Colonic mucosa (tissue), 4 donors: ENCODE measurements at regions of chrX and their contacts with region 1.

Region 1: DNA sequence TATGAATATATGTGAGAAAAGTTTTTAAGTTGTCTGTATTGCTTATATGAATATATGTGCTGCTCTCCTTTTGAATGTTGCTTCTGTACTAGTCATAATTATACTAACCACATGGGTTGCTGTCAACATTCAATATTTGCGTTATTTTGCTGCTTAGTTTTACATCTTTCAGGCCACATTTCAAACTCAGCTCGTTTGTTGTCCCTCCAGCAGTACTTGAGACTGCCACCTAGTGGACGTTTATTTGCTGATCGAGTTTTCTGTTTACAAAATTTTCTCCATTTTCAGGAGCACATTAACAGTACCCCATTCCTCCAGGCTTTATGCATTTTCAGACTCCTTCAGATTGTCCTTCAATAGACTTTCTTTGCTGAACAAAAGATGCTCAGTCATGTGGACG is 75.8 kb downstream of the NUDT11 start:
- DNase-seq: peak; percentile 24
- H3K4me3 ChIP-seq: no peak overlapping the region
- H3K27ac ChIP-seq: no peak overlapping the region
- H3K4me1 ChIP-seq: no peaks in the 10 kb centered on the region
- H3K27me3 ChIP-seq: no peaks in the 10 kb centered on the region
- CTCF ChIP-seq: peak; percentile 73

Region 2: DNA sequence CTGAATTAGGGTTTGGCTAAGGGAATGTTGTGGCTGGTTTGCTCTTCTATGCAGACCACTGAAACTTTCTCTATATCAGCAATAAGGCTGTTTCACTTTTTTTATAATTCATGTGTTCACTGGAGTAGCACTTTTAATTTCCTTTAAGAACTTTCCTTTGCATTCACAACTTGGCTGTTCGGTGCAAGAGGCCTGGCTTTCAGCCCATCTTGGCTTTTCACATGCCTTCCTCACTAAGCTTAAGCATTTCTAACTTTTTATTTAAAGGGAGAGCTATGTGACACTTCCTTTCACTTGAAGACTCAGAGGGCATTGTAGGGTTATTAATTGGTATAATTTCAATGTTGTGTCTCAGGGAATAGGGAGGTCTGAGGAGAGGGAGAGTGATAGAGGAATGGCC is 748.9 kb before region 1 on chrX:
- intact Hi-C with region 1: no loop called
- DNase-seq: no peak
- H3K4me3 ChIP-seq: no peak overlapping the region
- H3K27ac ChIP-seq: no peak overlapping the region
- H3K4me1 ChIP-seq: no peaks in the 10 kb centered on the region
- H3K27me3 ChIP-seq: no peaks in the 10 kb centered on the region
- CTCF ChIP-seq: no peak

Region 3: DNA sequence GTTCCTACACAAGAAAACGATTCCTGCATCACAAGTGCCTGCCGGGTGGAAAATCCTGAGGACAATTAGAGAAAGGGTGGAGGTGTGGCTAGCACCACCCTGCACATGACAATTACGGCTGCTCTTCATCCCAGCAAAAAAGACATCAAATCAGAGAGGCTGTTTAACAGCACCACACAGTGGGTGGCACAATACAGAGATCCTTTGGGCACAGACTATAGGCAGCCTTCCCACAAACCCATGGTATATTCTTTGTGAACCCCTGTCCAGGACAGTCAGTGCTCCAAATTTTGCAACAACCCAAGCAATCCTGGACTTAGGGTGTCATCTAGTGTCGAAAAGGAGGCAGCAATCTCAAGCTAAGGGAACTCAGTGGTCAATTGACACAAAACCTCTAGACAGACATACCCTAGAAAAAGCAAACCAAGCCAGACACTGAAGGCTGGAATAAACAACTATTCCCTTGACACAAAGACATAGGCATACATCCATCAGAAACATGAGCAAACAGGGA is 372.7 kb before region 1 on chrX:
- intact Hi-C with region 1: no loop called
- DNase-seq: no peak
- H3K4me3 ChIP-seq: no peak overlapping the region
- H3K27ac ChIP-seq: no peak overlapping the region
- H3K4me1 ChIP-seq: no peaks in the 10 kb centered on the region
- H3K27me3 ChIP-seq: peaks cover 5% of the 10 kb centered on the region
- CTCF ChIP-seq: no peak

Region 4: GRCh38 chrX:51336584-51336983 is 84.0 kb before region 1 on chrX:
- intact Hi-C with region 1: loop called (anchors 5 kb)
- DNase-seq: no peak
- H3K4me3 ChIP-seq: no peak overlapping the region
- H3K27ac ChIP-seq: no peak overlapping the region
- H3K4me1 ChIP-seq: no peaks in the 10 kb centered on the region
- H3K27me3 ChIP-seq: peaks cover 3% of the 10 kb centered on the region
- CTCF ChIP-seq: peak; percentile 34

Region 5: GRCh38 chrX:51463322-51463721 is 42.7 kb after region 1 on chrX:
- intact Hi-C with region 1: no loop called
- DNase-seq: no peak
- H3K4me3 ChIP-seq: no peak overlapping the region
- H3K27ac ChIP-seq: no peak overlapping the region
- H3K4me1 ChIP-seq: no peaks in the 10 kb centered on the region
- H3K27me3 ChIP-seq: no peaks in the 10 kb centered on the region
- CTCF ChIP-seq: no peak